ENCODE measurements at regions of chr5 and their contacts with region 1.

Region 1: GRCh38 chr5:149872351-149873040 is 72.1 kb downstream of the PDE6A start:
- DNase-seq: no peak
- H3K4me3 ChIP-seq: no peak overlapping the region
- H3K27ac ChIP-seq: no peak overlapping the region
- H3K4me1 ChIP-seq: peaks cover 0 to 5% (median 2%) of the 10 kb centered on the region in 4 experiments
- H3K27me3 ChIP-seq: no peaks in the 10 kb centered on the region

Region 2: DNA sequence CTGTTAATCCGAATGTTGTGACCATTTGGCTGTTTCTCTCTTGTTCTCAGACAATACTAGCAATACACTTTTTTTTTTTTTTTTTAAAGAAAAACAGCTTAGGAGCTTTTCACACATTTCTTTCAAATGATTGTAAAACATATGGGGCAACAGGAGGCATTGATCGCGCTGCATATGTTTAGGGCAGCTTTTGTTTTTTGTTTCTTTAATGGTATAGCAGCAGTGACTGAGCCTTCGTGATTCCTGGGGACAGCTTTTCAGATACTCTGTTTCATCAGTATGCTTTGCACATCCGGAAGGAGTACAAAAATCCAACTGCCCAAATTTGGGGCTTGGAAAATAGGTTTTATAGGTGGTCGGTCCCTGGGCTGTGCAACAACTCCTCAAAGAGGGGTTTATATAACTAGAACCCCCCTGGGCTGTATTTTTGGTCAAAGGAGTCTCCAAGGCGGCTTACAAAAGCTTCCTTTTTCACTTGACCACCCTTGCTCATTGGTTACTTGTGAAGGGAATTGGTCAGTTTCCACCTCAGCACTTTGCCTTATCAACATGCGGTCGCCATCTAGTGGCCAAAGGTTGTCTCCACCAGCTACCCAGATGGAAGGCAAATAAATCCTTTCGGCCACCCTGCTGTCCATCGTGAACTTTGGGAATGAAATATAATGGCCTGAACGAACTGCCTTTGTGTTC is 19.7 kb before region 1 on chr5:
- CTCF ChIA-PET with region 1: interaction called, 39 read pairs
- POLR2A ChIA-PET with region 1: no interaction called
- DNase-seq: peak; percentile 18 to 47 (median 35)
- H3K4me3 ChIP-seq: no peak overlapping the region
- H3K27ac ChIP-seq: no peak overlapping the region
- H3K4me1 ChIP-seq: peaks cover 0 to 10% (median 6%) of the 10 kb centered on the region in 4 experiments
- H3K27me3 ChIP-seq: no peaks in the 10 kb centered on the region

Region 3: GRCh38 chr5:150081541-150082283 is 209.2 kb after region 1 on chr5:
- CTCF ChIA-PET with region 1: no interaction called
- POLR2A ChIA-PET with region 1: no interaction called
- DNase-seq: peak; percentile 87 to 97 (median 96)
- H3K4me3 ChIP-seq: peak overlapping the region in 4 of 7 experiments; percentile 3 to 48 (median 36)
- H3K27ac ChIP-seq: peak overlapping the region; percentile 46 to 72
- H3K4me1 ChIP-seq: peaks cover 21 to 82% (median 62%) of the 10 kb centered on the region in 4 experiments
- H3K27me3 ChIP-seq: no peaks in the 10 kb centered on the region

Measured in common myeloid progenitor, CD34-positive (primary cell).